Activated CD4-positive, alpha-beta T cell treated with anti-CD3 and anti-CD28 coated beads for 36 hours (primary cell): ENCODE measurements at regions of chr3 and their contacts with region 1.

Region 1: GRCh38 chr3:72426618-72427397 is 421.4 kb downstream of the SHQ1 start:
- DNase-seq: no peak
- ATAC-seq: peak; percentile 85
- H3K4me3 Mint-ChIP-seq: peak overlapping the region; percentile 6
- H3K27ac Mint-ChIP-seq: peak overlapping the region; percentile 77
- H3K4me1 Mint-ChIP-seq: peaks cover 80% of the 10 kb centered on the region
- H3K27me3 Mint-ChIP-seq: no peaks in the 10 kb centered on the region

Region 2: GRCh38 chr3:72339116-72340030 is 87.4 kb before region 1 on chr3:
- CTCF ChIA-PET with region 1: no interaction called
- POLR2A ChIA-PET with region 1: no interaction called
- intact Hi-C with region 1: loop called in 1 of 2 experiments (anchors 5 kb)
- DNase-seq: no peak
- ATAC-seq: no peak
- H3K4me3 Mint-ChIP-seq: no peak overlapping the region
- H3K27ac Mint-ChIP-seq: no peak overlapping the region
- H3K4me1 Mint-ChIP-seq: peaks cover 34% of the 10 kb centered on the region
- H3K27me3 Mint-ChIP-seq: no peaks in the 10 kb centered on the region

Region 3: GRCh38 chr3:72413228-72413627 is 13.6 kb before region 1 on chr3:
- CTCF ChIA-PET with region 1: no interaction called
- POLR2A ChIA-PET with region 1: interaction called, 5 read pairs
- intact Hi-C with region 1: loop called (anchors 1 kb)
- DNase-seq: no peak
- ATAC-seq: peak; percentile 91
- H3K4me3 Mint-ChIP-seq: no peak overlapping the region
- H3K27ac Mint-ChIP-seq: peak overlapping the region; percentile 55
- H3K4me1 Mint-ChIP-seq: peaks cover 87% of the 10 kb centered on the region
- H3K27me3 Mint-ChIP-seq: no peaks in the 10 kb centered on the region

Region 4: DNA sequence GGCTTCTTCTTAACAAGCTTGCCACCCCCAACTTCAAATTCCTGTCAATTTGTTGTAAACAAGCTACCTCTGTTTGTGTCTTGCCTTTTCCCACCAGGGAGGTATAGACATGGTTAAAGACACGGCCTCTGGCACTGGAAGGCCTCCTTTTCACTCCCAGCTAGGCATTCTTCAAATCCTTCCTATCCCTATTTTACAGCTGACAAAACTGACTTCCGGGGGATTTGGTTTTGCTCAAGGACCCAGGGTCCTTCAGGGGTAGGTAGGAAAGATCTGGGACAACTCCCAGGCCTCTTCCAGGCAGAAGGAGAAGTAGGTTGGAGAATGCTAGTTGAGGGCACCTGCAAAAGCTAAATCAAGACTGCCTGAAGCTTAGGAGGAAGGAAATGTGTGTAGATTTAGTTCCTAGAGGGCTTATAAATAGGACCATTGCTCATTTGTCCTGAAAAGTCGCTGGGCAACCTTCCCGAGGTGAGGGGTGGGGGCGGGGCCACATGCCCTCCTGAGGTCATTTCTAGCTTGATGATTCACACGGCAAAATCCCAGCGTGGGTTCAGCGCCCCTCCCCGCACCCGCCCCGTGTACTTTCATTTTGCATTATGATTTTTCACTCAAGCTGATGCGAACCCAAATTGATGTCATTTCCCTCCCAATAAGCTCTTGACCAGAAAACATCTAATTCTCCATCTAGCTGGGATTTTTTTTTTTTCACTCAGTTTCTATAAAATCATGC is 55.9 kb after region 1 on chr3:
- CTCF ChIA-PET with region 1: interaction called, 3 read pairs
- POLR2A ChIA-PET with region 1: interaction called, 4 read pairs
- intact Hi-C with region 1: loop called (anchors 1 to 10 kb)
- DNase-seq: peak; percentile 94
- ATAC-seq: peak; percentile 46
- H3K4me3 Mint-ChIP-seq: peak overlapping the region; percentile 51
- H3K27ac Mint-ChIP-seq: peak overlapping the region; percentile 90
- H3K4me1 Mint-ChIP-seq: peaks cover 73% of the 10 kb centered on the region
- H3K27me3 Mint-ChIP-seq: no peaks in the 10 kb centered on the region

Region 5: DNA sequence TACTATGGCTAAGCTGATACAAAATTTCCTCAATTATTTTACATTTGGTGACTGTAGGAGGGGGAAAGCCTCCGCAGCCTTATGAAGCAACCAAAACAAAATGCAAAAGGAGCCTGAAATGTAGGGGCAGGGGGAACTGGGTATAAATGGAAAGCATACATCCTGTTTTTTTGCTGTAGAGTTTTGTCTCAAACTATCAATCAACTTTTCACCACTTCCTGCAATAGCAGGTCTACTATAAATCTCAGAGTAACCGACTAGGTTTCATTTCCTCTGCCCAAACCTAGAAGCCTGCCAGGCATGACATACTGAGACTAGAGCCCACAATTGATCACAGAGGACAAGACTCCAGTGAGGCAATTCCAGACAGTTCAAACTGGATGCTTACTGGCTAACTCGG is 330.1 kb after region 1 on chr3:
- CTCF ChIA-PET with region 1: no interaction called
- POLR2A ChIA-PET with region 1: interaction called, 3 read pairs
- intact Hi-C with region 1: loop called in 1 of 2 experiments (anchors 10 kb)
- DNase-seq: peak; percentile 63
- ATAC-seq: peak; percentile 98
- H3K4me3 Mint-ChIP-seq: no peak overlapping the region
- H3K27ac Mint-ChIP-seq: peak overlapping the region; percentile 89
- H3K4me1 Mint-ChIP-seq: peaks cover 66% of the 10 kb centered on the region
- H3K27me3 Mint-ChIP-seq: no peaks in the 10 kb centered on the region